B cell (primary cell): ENCODE measurements at regions of chr1 and their contacts with region 1.

Region 1: DNA sequence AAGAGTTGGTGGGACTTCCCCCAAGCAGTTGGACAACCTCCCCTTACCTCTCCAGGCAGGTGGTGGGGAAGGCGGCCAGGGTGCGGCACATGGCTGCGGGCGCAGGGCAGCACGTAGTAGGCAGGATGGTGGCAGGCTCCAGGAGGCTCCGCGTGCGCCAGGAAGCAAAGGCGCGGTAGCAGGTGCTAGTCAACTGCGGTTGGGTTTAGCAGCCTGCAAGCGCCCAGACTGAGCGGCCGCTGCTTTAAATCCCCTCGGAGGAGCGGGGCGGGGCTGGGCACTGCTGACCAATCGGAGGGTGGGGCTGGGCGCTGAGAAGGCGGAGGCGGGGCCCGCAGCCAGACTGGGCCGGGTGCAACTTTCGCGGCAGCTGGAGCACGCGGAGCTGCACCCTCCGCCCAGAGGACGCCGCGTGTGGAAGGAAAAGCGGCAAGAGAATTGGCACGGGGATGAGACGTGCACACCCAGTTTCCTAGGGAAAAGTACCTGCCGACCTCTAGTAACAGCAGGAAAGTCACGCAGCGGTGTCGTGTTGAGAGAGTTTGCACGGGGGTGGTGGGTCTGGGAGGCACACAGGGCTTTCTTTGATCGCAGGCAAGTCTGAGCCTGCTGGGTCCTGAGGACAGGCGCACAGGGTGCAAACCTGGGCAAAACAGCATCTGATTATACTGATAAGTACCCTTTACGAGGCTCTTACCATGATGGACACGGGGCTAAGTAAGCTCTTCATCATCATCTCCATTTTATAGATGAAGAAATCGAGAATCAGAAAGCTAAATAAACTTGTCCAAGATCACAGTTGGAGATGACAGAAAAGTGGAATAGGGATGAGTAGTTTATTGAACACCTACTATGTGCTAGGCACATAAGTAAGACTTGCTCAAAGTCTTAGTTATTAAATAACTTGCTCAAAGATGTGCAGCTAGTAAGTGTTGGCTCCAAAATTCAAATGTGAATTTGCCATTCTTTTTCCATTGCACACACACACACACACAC is at the start of gene RGS16:
- DNase-seq: peak; percentile 91
- ATAC-seq: peak; percentile 98
- H3K4me3 ChIP-seq: peak within 1 kb of the TSS in 4 of 5 experiments; percentile 47 to 67 (median 59)
- H3K4me3 Mint-ChIP-seq: no peak within 1 kb of the TSS
- H3K27ac ChIP-seq: no peak within 1 kb of the TSS
- H3K27ac Mint-ChIP-seq: peak within 1 kb of the TSS; percentile 83
- H3K4me1 ChIP-seq: peaks cover 26 to 29% of the 10 kb centered on the region in 2 donors
- H3K4me1 Mint-ChIP-seq: peaks cover 3% of the 10 kb centered on the region
- H3K27me3 ChIP-seq: peaks cover 0 to 7% (median 0%) of the 10 kb centered on the region in 4 experiments
- H3K27me3 Mint-ChIP-seq: no peaks in the 10 kb centered on the region
- CTCF ChIP-seq: no peak
- total RNA-seq, gene RGS16: 3.1 and 3.3 TPM in 2 replicates

Region 2: GRCh38 chr1:182391362-182392044 is 213.0 kb before region 1 on chr1 and contains the start of gene GLUL:
- CTCF ChIA-PET with region 1: no interaction called
- POLR2A ChIA-PET with region 1: no interaction called
- intact Hi-C with region 1: loop called (anchors 5 kb)
- DNase-seq: peak; percentile 81
- ATAC-seq: peak; percentile 80
- H3K4me3 ChIP-seq: peak within 1 kb of the TSS; percentile 64 to 76 (median 71)
- H3K4me3 Mint-ChIP-seq: peak within 1 kb of the TSS; percentile 97
- H3K27ac ChIP-seq: peak within 1 kb of the TSS; percentile 54 to 62
- H3K27ac Mint-ChIP-seq: peak within 1 kb of the TSS; percentile 96
- H3K4me1 ChIP-seq: peaks cover 20 to 34% of the 10 kb centered on the region in 2 donors
- H3K4me1 Mint-ChIP-seq: peaks cover 32% of the 10 kb centered on the region
- H3K27me3 ChIP-seq: peaks cover 0 to 15% (median 6%) of the 10 kb centered on the region in 4 experiments
- H3K27me3 Mint-ChIP-seq: peaks cover under 1% of the 10 kb centered on the region
- CTCF ChIP-seq: no peak
- total RNA-seq, gene GLUL: 44.2 and 53.7 TPM in 2 replicates

Region 3: DNA sequence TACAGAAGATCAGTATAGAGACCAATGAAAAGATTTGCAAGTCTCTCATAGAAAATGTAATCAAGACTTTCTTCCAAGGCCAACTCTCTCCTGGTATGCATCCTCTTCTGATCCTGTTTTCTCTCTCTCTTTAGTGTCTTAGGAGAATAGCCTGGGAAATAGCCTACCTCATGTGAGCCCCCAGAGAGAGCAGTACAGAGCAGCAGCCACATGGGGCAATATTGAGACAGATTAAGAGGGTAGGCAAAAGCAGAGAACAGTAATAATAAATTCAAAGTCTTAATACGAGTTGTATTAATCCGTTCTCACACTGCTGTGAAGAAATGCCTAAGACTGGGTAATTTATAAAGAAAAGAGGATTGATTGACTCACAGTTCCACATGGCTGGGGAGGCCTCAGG is 76.8 kb before region 1 on chr1:
- CTCF ChIA-PET with region 1: no interaction called
- POLR2A ChIA-PET with region 1: no interaction called
- intact Hi-C with region 1: no loop called
- DNase-seq: no peak
- ATAC-seq: no peak
- H3K4me3 ChIP-seq: no peak overlapping the region
- H3K4me3 Mint-ChIP-seq: no peak overlapping the region
- H3K27ac ChIP-seq: no peak overlapping the region
- H3K27ac Mint-ChIP-seq: no peak overlapping the region
- H3K4me1 ChIP-seq: no peaks in the 10 kb centered on the region
- H3K4me1 Mint-ChIP-seq: no peaks in the 10 kb centered on the region
- H3K27me3 ChIP-seq: no peaks in the 10 kb centered on the region
- H3K27me3 Mint-ChIP-seq: peaks cover 3% of the 10 kb centered on the region
- CTCF ChIP-seq: no peak

Region 4: DNA sequence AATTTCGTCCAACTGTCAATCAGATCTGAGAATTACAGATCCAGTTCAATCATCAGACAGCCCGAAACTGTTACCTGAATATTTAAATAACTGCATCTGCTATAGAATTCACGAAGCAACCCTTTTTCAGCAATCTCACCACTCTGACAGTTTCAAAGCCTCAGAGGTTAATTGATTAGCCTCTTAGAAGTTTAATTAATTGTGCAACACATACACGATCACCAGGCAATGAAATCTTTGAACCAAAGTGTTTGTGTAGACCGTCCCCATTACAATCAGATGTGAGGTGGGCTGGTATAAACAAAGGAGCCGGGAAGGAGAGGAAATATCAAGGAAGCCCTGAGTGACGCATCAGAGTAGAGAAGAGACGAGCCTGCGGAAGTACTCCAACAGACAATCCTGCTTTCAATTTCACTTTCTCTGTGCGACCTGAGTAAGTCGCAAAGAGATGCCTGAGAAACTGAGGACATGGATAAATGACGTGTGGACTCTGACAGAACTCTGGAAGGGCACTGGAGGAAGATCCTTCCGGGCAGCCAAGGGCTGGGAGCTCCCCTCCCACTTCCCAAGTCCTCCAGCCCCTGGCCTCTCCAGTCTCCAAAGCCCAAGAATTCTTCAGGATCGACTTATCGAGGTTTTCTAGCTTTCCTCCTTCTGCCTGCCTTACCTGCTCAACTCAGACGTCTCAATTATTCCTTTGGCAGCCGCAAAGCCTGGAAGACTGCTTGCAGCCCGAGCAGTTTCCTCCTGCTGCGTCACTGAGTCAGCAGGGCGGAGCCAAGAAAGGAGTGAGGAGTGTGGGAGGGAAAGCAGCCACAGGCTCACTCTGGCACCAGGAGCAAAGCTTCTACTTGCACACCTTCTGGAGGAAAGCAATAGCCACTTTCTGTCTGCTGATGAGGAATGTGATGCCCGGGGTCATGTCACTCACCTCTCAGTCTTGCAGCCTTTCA is 15.7 kb before region 1 on chr1 and contains the start of gene RNASEL:
- CTCF ChIA-PET with region 1: interaction called, 56 read pairs
- POLR2A ChIA-PET with region 1: no interaction called
- intact Hi-C with region 1: no loop called
- DNase-seq: peak; percentile 80
- ATAC-seq: peak; percentile 87
- H3K4me3 ChIP-seq: peak within 1 kb of the TSS; percentile 68 to 100 (median 82)
- H3K4me3 Mint-ChIP-seq: peak within 1 kb of the TSS; percentile 99
- H3K27ac ChIP-seq: peak within 1 kb of the TSS; percentile 94 to 98
- H3K27ac Mint-ChIP-seq: peak within 1 kb of the TSS; percentile 99
- H3K4me1 ChIP-seq: peaks cover 28 to 32% of the 10 kb centered on the region in 2 donors
- H3K4me1 Mint-ChIP-seq: peaks cover 42% of the 10 kb centered on the region
- H3K27me3 ChIP-seq: no peaks in the 10 kb centered on the region
- H3K27me3 Mint-ChIP-seq: no peaks in the 10 kb centered on the region
- CTCF ChIP-seq: no peak
- total RNA-seq, gene RNASEL: 18.1 and 21.0 TPM in 2 replicates

Region 5: DNA sequence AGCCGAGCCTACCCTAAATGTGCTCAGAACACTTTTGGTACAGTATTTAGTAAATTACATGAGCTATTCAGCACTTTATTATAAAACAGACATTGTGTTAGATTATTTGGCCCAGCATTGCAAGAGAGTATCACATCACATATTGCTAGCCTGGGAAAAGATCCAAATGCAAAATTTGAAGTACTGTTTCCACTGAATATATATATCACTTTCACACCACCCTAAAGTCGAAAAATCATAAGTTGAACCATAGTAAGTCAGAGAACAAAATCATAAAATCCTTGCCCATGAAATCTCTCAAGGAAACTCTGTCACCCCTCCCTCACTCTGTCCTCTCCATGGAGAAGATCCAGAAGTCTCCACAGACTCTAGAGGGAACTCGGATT is 46.9 kb after region 1 on chr1:
- CTCF ChIA-PET with region 1: no interaction called
- POLR2A ChIA-PET with region 1: no interaction called
- intact Hi-C with region 1: no loop called
- DNase-seq: no peak
- ATAC-seq: no peak
- H3K4me3 ChIP-seq: no peak overlapping the region
- H3K4me3 Mint-ChIP-seq: no peak overlapping the region
- H3K27ac ChIP-seq: no peak overlapping the region
- H3K27ac Mint-ChIP-seq: no peak overlapping the region
- H3K4me1 ChIP-seq: peaks cover 7 to 10% of the 10 kb centered on the region in 2 donors
- H3K4me1 Mint-ChIP-seq: peaks cover 9% of the 10 kb centered on the region
- H3K27me3 ChIP-seq: peaks cover 0 to 3% (median 0%) of the 10 kb centered on the region in 4 experiments
- H3K27me3 Mint-ChIP-seq: no peaks in the 10 kb centered on the region
- CTCF ChIP-seq: no peak

Region 6: DNA sequence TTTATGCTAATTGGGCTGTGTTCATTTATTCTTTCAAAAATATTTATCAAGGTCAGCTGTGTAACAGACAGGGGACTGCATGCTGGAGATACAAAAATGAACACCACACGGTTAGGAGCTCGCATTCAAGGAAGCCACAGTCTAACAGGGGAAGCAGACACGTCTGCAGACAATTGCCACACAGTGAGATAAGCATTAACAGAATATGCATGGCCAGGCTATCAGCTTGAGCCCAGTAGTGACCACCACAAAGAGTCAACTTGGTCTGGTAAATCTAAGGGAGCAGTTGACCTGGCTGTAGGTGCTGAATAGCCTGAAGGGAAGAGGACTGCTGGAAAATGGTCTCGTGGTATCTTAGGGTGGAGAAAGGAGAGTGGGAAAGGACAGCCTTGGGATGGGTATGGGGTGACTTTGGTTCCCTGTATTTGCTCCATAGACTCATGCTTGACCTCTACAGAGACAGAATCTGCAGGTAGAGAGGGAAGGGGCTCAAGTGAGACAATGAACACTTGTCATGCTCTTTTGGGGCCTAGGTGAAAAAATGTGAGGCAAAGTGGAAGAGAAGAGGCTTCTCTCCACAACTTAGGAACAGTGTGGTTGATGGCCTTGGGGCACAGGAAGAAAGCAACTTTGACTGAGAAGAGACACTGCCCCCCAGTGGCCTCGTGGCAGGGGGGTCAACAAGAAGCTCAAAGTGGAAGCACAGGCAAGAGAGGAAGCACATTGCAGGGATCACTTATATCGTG is 177.5 kb after region 1 on chr1:
- CTCF ChIA-PET with region 1: interaction called, 989 read pairs
- POLR2A ChIA-PET with region 1: interaction called, 6 read pairs
- intact Hi-C with region 1: loop called (anchors 1 kb)
- DNase-seq: peak; percentile 80
- ATAC-seq: peak; percentile 83
- H3K4me3 ChIP-seq: no peak overlapping the region
- H3K4me3 Mint-ChIP-seq: no peak overlapping the region
- H3K27ac ChIP-seq: no peak overlapping the region
- H3K27ac Mint-ChIP-seq: no peak overlapping the region
- H3K4me1 ChIP-seq: no peaks in the 10 kb centered on the region
- H3K4me1 Mint-ChIP-seq: peaks cover 5% of the 10 kb centered on the region
- H3K27me3 ChIP-seq: no peaks in the 10 kb centered on the region
- H3K27me3 Mint-ChIP-seq: no peaks in the 10 kb centered on the region
- CTCF ChIP-seq: peak; percentile 81

Region 7: GRCh38 chr1:182839209-182840065 is 235.0 kb after region 1 on chr1 and contains the start of gene DHX9:
- CTCF ChIA-PET with region 1: interaction called, 6 read pairs
- POLR2A ChIA-PET with region 1: interaction called, 3 read pairs
- intact Hi-C with region 1: loop called (anchors 1 kb)
- DNase-seq: peak; percentile 97
- ATAC-seq: peak; percentile 80
- H3K4me3 ChIP-seq: peak within 1 kb of the TSS; percentile 85 to 92 (median 92)
- H3K4me3 Mint-ChIP-seq: peak within 1 kb of the TSS; percentile 92
- H3K27ac ChIP-seq: peak within 1 kb of the TSS; percentile 81 to 85
- H3K27ac Mint-ChIP-seq: peak within 1 kb of the TSS; percentile 97
- H3K4me1 ChIP-seq: peaks cover 22 to 28% of the 10 kb centered on the region in 2 donors
- H3K4me1 Mint-ChIP-seq: peaks cover 35% of the 10 kb centered on the region
- H3K27me3 ChIP-seq: no peaks in the 10 kb centered on the region
- H3K27me3 Mint-ChIP-seq: no peaks in the 10 kb centered on the region
- CTCF ChIP-seq: peak; percentile 43
- total RNA-seq, gene DHX9: 207 and 213 TPM in 2 replicates

Region 8: DNA sequence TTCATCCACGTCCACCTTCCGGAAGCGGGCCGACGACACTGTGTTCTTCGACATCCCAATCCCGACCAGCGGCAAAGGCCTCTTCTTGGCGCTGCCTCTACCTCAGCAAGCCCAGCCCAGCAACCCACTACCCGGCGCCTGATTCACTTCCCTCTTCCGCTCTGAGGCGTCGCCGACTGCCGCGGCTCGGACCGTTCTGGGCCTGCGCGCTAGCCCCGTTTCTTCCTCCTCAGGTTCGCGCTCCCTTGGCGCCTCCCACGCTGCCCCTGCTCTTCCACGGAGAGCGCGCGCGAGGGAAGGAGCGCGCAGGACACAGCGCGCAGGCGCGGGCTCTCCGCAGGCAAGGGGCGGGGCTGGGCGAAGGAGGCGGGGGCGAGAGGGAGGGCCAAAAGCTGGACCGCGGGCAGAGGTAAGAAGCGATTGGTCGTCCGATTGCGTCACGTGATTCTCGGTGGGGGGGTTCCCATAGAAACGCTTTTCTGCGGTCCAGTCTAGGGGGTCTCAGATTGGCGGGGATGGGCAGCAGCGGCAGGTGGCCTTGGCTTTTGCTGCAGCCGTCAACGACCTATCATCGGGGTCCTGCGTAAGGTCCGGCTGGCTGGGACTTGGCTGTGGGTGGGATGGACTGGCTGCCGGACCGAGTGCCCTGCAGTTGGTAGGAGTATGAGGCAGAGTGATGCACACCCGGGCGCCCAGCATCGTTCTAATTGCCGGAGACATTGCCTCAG is 1031.3 kb after region 1 on chr1 and contains the start of gene ARPC5:
- CTCF ChIA-PET with region 1: no interaction called
- POLR2A ChIA-PET with region 1: no interaction called
- intact Hi-C with region 1: loop called (anchors 2 kb)
- DNase-seq: peak; percentile 98
- ATAC-seq: peak; percentile 88
- H3K4me3 ChIP-seq: peak within 1 kb of the TSS; percentile 83 to 95 (median 87)
- H3K4me3 Mint-ChIP-seq: peak within 1 kb of the TSS; percentile 100
- H3K27ac ChIP-seq: peak within 1 kb of the TSS; percentile 59 to 80
- H3K27ac Mint-ChIP-seq: peak within 1 kb of the TSS; percentile 99
- H3K4me1 ChIP-seq: peaks cover 20 to 34% of the 10 kb centered on the region in 2 donors
- H3K4me1 Mint-ChIP-seq: peaks cover 42% of the 10 kb centered on the region
- H3K27me3 ChIP-seq: no peaks in the 10 kb centered on the region
- H3K27me3 Mint-ChIP-seq: no peaks in the 10 kb centered on the region
- CTCF ChIP-seq: no peak
- total RNA-seq, gene ARPC5: 91.9 and 103 TPM in 2 replicates